Astrocyte of the cerebellum (primary cell): ENCODE measurements at regions of chr11 and their contacts with region 1.

Region 1: GRCh38 chr11:121983906-121984305 is 132.1 kb downstream of the BLID start:
- DNase-seq: no peak
- H3K4me3 ChIP-seq: no peak overlapping the region
- CTCF ChIP-seq: no peak

Region 2: DNA sequence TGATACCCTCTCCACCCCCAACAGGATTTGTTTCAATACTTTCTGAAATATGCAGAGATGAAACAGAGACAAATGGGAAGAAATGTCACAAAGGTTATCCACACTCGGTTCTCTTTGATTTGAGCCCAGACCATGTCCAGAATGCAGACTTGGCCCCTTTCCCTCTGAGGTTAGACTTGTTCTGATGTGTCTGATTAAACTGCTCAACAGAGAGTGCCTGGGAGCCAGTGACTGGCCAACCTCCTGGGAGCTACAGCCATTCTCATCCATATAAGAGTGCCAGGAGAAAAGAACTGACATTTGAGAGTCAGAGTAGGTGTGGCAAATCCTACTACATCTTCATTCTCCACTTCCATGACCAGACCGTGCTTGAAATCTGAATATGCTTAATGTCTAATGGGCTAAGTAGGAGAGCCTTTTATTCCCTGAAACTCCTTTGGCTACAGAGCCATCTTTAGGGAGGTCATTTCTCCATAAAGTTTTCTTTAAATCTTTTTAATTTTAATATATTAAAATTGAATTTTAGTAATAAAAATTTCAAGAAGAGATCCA is 69.3 kb before region 1 on chr11:
- in situ Hi-C with region 1: loop called (anchors 5 kb)
- DNase-seq: no peak
- H3K4me3 ChIP-seq: no peak overlapping the region
- CTCF ChIP-seq: no peak